Psoas muscle (tissue), 8 donors: ENCODE measurements at regions of chr10 and their contacts with region 1.

Region 1: DNA sequence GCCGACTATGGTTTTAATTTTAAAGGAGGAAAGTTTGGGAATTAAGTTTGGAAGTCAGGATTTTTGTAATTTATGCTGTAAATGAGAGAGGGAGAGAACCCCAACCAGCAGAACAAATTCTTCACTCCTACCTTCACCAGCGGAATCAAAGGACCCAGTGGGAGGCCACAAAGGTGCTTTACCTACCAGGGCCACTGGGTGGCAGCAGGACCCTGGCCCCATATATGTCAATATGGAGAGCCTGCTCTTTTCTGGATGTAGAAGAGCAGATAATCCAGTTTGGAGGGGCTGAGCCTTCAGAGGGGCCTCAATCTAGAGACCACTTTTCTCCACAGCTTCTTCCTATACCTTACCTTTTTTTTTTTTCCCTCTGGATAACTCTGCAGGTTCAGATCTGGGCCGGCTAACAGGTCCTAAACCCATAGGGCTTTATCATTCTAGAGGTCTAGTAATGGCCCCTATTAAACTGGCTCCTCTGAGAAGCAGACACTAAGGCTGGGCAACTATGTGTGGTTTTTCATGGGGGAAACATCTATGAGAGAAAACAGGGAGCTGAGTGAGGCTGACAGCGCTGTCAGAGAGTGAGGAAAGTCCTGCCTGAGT is 8.5 kb upstream of the SCD start:
- DNase-seq: peak; percentile 71 to 86
- ATAC-seq: peak; percentile 66 to 85 (median 74)
- H3K4me3 ChIP-seq: no peak overlapping the region
- H3K27ac ChIP-seq: no peak overlapping the region
- H3K4me1 ChIP-seq: peaks cover 15% of the 10 kb centered on the region
- H3K27me3 ChIP-seq: no peaks in the 10 kb centered on the region
- CTCF ChIP-seq: peak; percentile 95

Region 2: DNA sequence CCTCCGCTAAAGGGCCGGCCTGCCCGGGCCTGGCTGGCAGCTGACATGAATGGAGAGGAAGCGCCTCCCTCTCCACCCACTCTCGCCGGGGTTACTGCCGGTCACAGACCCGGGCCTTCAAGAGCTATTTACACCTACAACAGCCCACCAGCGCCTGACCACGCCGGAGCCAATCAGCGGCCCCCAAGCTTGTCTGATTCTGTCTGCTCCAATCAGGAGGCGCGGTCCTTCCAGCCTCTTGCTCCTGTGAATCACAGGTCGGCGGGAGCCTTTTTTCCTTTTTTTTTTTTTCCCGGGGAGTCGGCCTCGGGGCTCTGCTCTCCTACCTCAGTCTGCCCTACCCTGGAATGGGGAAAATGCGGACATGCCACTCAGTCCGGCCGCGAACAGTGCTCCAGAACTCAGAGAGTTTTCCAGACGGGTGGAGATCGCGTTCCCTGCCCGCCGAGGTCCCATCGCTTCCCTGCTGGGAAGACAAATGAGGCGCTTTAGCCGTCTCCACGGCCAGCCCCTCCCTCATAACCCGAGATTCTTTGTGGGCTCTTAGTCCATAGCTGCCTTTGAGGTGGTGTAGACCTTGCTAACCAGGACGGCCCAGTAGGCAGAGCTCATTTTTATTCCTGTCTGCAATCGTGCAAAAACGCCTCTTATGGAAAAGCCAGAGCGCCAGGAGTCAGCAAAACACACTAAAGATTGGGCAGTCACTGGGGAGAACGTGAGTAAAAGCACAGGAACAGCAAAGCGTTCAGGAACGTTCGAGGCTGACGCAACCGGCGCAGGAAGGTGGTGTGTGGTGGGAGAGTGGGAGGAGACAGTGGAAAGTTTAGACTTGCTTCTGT is 35.0 kb after region 1 on chr10:
- intact Hi-C with region 1: loop called (anchors 2 to 5 kb)
- DNase-seq: peak; percentile 97 to 98
- ATAC-seq: peak; percentile 88 to 95 (median 91)
- H3K4me3 ChIP-seq: peak overlapping the region; percentile 69
- H3K27ac ChIP-seq: peak overlapping the region; percentile 94
- H3K4me1 ChIP-seq: peaks cover 44% of the 10 kb centered on the region
- H3K27me3 ChIP-seq: no peaks in the 10 kb centered on the region
- CTCF ChIP-seq: no peak

Region 3: DNA sequence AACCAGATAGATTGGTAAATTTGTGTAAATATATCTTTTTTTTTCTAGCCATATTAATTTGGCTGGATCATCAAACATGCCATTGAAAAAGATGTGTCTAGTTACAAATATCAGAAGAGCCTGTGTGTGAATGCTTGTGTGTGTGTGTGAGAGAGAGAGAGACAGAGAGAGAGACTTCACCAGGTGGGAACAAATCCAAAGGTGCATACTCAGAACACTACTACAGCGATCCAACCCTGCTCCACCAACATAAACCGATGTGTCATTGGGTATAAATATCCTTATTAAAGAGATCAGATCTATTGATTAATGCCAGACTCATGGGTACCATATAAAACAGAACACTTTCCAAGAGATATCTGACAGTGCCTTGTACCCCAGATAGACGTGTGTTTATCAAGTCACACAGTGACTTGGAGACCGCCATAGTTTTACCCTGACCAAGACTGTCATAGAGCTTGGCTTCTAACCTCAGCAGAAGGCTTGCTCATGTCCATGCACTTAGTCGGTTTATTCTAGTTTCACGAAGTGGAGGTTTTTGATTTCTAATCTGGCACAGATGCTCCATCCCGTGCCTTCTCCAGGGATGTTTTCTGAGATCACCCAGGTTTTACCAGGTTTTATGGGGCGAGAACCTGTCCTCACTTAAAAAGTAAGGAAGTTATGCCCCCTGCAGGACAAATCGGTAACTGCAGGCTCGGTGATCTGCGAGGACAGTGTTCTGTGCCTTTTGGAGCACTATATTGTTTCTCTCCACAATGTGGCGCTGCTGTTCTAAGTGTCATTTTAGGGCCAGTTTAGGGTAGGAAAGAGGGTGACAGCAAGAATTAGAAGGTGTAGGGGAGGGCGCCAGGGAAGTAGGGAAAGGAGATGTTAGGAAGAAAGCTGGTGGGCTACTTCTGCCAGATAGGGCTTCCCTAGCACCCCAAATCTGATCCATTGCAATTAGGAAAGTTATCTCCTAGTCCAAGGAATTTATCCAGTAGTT is 95.0 kb after region 1 on chr10:
- intact Hi-C with region 1: loop called (anchors 1 to 2 kb)
- DNase-seq: peak; percentile 88 to 91
- ATAC-seq: peak; percentile 92 to 97 (median 95)
- H3K4me3 ChIP-seq: no peak overlapping the region
- H3K27ac ChIP-seq: no peak overlapping the region
- H3K4me1 ChIP-seq: peaks cover under 1% of the 10 kb centered on the region
- H3K27me3 ChIP-seq: peaks cover 0 to 4% (median 0%) of the 10 kb centered on the region in 3 donors
- CTCF ChIP-seq: peak; percentile 100